ENCODE measurements at regions of chr4 and their contacts with region 1.

Region 1: GRCh38 chr4:19095491-19096046 is 1074.0 kb upstream of the LCORL start:
- DNase-seq: no peak
- H3K4me3 ChIP-seq: no peak overlapping the region
- H3K27ac ChIP-seq: no peak overlapping the region
- H3K4me1 ChIP-seq: no peaks in the 10 kb centered on the region
- H3K27me3 ChIP-seq: no peaks in the 10 kb centered on the region
- CTCF ChIP-seq: no peak
- POLR2A ChIP-seq: no peak

Region 2: GRCh38 chr4:18749391-18749790 is 346.2 kb before region 1 on chr4:
- intact Hi-C with region 1: loop called (anchors 5 kb)
- DNase-seq: no peak
- H3K4me3 ChIP-seq: no peak overlapping the region
- H3K27ac ChIP-seq: no peak overlapping the region
- H3K4me1 ChIP-seq: no peaks in the 10 kb centered on the region
- H3K27me3 ChIP-seq: no peaks in the 10 kb centered on the region
- CTCF ChIP-seq: no peak
- POLR2A ChIP-seq: no peak

Region 3: GRCh38 chr4:19417256-19417655 is 321.7 kb after region 1 on chr4:
- intact Hi-C with region 1: no loop called
- DNase-seq: no peak
- H3K4me3 ChIP-seq: no peak overlapping the region
- H3K27ac ChIP-seq: no peak overlapping the region
- H3K4me1 ChIP-seq: no peaks in the 10 kb centered on the region
- H3K27me3 ChIP-seq: no peaks in the 10 kb centered on the region
- CTCF ChIP-seq: no peak
- POLR2A ChIP-seq: no peak

Region 4: DNA sequence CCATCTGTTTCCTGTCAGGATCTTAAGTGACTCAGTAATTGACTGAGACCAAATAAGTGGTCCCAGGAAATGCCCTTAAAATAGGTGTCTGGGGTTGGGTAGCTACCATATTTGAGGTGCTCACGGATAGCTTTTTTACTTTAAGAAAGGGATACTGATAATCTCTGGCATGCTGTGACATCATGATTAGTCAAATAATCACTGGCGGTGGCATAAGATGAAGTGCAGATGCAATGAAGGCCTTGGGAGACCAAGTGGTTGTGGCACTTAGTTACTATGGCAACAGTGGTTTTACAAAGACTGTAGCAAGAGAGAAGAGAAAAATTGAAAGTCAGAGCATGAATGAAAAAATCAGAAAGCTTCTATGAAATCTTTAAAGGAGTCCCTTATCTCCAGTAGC is 1041.6 kb after region 1 on chr4:
- intact Hi-C with region 1: loop called (anchors 10 kb)
- DNase-seq: no peak
- H3K4me3 ChIP-seq: no peak overlapping the region
- H3K27ac ChIP-seq: no peak overlapping the region
- H3K4me1 ChIP-seq: no peaks in the 10 kb centered on the region
- H3K27me3 ChIP-seq: no peaks in the 10 kb centered on the region
- CTCF ChIP-seq: no peak
- POLR2A ChIP-seq: no peak